ENCODE measurements at regions of chr9 and their contacts with region 1.

Region 1: GRCh38 chr9:132169672-132170392 is 8.0 kb downstream of the NTNG2 start:
- DNase-seq: peak; percentile 62 to 66
- H3K4me3 ChIP-seq: no peak overlapping the region
- H3K4me3 Mint-ChIP-seq: no peak overlapping the region
- H3K27ac Mint-ChIP-seq: no peak overlapping the region
- H3K4me1 ChIP-seq: no peaks in the 10 kb centered on the region
- H3K4me1 Mint-ChIP-seq: no peaks in the 10 kb centered on the region
- H3K27me3 ChIP-seq: no peaks in the 10 kb centered on the region
- H3K27me3 Mint-ChIP-seq: peaks cover 33% of the 10 kb centered on the region
- CTCF ChIP-seq: peak; percentile 77 to 86

Region 2: GRCh38 chr9:132069046-132069898 is 100.6 kb before region 1 on chr9:
- CTCF ChIA-PET with region 1: no interaction called
- POLR2A ChIA-PET with region 1: no interaction called
- intact Hi-C with region 1: no loop called
- DNase-seq: no peak
- H3K4me3 ChIP-seq: no peak overlapping the region
- H3K4me3 Mint-ChIP-seq: no peak overlapping the region
- H3K27ac Mint-ChIP-seq: no peak overlapping the region
- H3K4me1 ChIP-seq: no peaks in the 10 kb centered on the region
- H3K4me1 Mint-ChIP-seq: no peaks in the 10 kb centered on the region
- H3K27me3 ChIP-seq: no peaks in the 10 kb centered on the region
- H3K27me3 Mint-ChIP-seq: no peaks in the 10 kb centered on the region
- CTCF ChIP-seq: no peak

Region 3: DNA sequence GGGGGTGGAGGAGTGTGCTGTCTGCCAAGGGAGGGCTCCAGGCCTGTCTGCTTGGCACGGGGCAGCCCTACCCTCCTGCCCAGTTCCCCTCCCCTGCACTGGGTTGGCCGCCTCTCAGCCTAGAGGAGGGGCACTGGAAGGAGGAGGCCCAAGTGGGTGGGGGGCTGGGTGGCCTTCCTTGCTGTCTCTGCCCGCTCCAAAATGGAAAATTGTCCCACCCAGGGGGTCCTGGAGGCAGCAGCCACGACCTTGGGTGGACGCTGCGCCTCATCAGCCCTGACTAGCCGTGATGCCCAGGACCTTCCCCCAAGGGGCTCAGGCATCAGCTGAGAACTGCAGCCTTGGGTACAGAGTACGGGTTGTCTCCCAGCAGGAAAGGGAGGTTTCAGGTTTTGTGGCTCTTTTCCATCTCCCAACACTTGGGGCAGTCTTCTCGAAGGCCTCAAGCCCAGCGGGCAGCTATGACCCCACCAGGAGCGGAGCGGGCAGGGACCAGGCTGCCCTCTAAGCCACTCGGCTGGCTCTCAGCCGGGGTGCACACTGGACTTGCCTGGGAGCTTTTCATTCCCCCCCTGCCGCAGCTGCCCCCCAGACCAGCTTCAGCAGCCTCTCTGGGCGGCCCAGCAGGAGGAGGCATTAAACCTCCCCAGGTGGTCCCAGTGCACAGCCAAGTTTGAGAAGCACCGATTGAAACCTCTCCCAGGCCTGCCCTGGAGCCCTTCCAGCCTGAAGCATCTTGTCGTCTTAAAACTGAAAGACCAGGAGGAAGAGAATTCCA is 12.7 kb after region 1 on chr9:
- CTCF ChIA-PET with region 1: no interaction called
- POLR2A ChIA-PET with region 1: no interaction called
- intact Hi-C with region 1: no loop called
- DNase-seq: no peak
- H3K4me3 ChIP-seq: no peak overlapping the region
- H3K4me3 Mint-ChIP-seq: no peak overlapping the region
- H3K27ac Mint-ChIP-seq: no peak overlapping the region
- H3K4me1 ChIP-seq: no peaks in the 10 kb centered on the region
- H3K4me1 Mint-ChIP-seq: no peaks in the 10 kb centered on the region
- H3K27me3 ChIP-seq: no peaks in the 10 kb centered on the region
- H3K27me3 Mint-ChIP-seq: peaks cover 10% of the 10 kb centered on the region
- CTCF ChIP-seq: peak in 1 of 2 experiments; percentile 7

Region 4: DNA sequence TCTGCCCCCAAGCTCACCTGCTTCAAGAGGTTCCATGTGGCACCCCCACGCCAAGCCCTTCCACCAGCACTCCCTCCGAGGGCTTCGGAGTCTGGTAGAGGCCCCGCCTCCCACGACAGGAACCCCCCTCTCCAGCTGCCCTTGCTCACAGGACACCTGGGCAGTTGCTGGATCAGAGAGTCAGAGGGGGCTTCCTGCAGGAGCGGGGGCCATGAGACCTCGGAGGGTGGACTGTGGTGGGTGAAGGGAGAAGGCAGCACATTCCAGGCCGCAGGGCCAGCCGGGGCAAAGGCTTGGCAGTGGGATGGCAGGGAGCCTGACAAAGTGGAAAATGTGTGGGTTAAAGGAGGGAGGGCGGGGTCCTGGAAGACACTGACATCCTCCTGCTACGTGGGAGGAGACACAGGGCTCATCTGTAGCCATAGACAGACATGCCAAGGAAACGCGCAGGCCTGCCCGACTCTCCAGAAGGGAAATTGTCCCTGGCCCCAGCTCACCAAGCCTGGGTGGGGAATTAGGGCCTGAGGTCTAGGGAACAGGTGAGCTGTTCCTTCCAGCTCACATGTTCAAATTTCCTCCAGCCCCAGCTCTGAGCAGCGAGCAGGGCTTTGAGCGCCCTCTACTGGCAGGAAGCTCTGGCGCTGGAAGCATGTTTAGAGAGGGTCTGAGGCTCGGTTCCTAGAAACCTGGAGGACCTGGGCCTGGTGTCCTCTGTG is 66.3 kb after region 1 on chr9:
- CTCF ChIA-PET with region 1: interaction called, 45 read pairs
- POLR2A ChIA-PET with region 1: no interaction called
- intact Hi-C with region 1: loop called (anchors 1 kb)
- DNase-seq: peak; percentile 78 to 85
- H3K4me3 ChIP-seq: no peak overlapping the region
- H3K4me3 Mint-ChIP-seq: no peak overlapping the region
- H3K27ac Mint-ChIP-seq: no peak overlapping the region
- H3K4me1 ChIP-seq: peaks cover 5% of the 10 kb centered on the region; the same call in 1 of the 2 replicates
- H3K4me1 Mint-ChIP-seq: no peaks in the 10 kb centered on the region
- H3K27me3 ChIP-seq: no peaks in the 10 kb centered on the region; the same call in 1 of the 2 replicates
- H3K27me3 Mint-ChIP-seq: peaks cover 11% of the 10 kb centered on the region
- CTCF ChIP-seq: peak; percentile 81 to 95

Measured in Caco-2 (cell line).